PC-9 (cell line): ENCODE measurements at regions of chr21 and their contacts with region 1.

Region 1: GRCh38 chr21:36854391-36854790 is 112.1 kb downstream of the HLCS start:
- DNase-seq: no peak
- H3K4me3 ChIP-seq: no peak overlapping the region
- H3K27ac ChIP-seq: no peak overlapping the region
- H3K4me1 ChIP-seq: peaks cover 14% of the 10 kb centered on the region
- H3K27me3 ChIP-seq: no peaks in the 10 kb centered on the region
- CTCF ChIP-seq: peak; percentile 59

Region 2: DNA sequence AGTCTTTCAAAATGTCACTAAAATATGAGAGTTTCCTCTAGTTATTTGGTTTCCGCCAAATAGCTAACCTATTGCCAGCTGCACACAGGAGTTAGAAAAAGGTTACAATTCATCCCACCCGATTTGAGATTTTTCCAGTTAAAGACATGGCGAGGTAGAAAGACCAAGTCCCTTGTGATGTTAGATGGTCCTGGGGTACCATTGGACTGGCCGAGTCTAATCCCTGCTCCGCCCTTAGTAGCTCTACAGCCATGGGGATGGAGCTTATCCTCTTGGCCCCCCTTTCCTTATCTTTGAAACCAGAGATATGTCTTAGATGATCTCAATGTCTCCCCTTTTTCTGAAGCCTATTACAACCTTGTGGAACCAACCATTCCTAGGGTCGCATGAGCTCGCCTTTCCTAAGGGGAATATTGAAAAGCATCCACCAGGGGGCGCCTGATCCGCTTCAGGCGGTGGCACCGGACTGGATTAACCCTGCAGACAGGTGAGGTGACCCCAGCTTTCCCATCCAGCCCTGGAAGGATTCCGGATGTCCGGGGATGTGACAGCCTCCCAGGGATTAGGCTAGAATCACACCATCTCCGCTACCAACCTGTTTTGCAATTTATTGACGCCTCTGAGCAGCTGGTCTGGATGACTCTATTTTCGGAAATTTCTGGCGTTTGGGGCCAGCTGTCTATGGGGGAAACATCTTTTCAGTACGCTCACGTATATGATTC is 223.7 kb before region 1 on chr21:
- CTCF ChIA-PET with region 1: no interaction called
- POLR2A ChIA-PET with region 1: interaction called, 10 read pairs
- intact Hi-C with region 1: no loop called
- DNase-seq: peak; percentile 43 to 61
- H3K4me3 ChIP-seq: no peak overlapping the region
- H3K27ac ChIP-seq: no peak overlapping the region
- H3K4me1 ChIP-seq: peaks cover 30% of the 10 kb centered on the region
- H3K27me3 ChIP-seq: no peaks in the 10 kb centered on the region
- CTCF ChIP-seq: peak; percentile 81

Region 3: DNA sequence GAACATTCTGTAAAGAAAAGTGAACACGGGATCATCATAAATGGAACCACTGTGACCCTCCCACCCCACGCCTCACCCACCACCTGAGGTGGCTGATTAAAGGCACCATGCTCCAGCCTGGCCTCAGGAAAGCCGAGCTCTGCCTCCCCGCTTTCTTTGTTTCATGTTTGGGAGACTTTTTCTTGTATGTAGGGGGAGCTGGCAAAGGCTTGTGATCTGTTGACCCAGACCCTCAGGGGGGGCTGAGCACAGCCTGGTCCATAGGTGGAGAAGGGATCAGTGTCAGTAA is 117.2 kb before region 1 on chr21:
- CTCF ChIA-PET with region 1: no interaction called
- POLR2A ChIA-PET with region 1: interaction called, 36 read pairs
- intact Hi-C with region 1: no loop called
- DNase-seq: no peak
- H3K4me3 ChIP-seq: no peak overlapping the region
- H3K27ac ChIP-seq: no peak overlapping the region
- H3K4me1 ChIP-seq: no peaks in the 10 kb centered on the region
- H3K27me3 ChIP-seq: no peaks in the 10 kb centered on the region
- CTCF ChIP-seq: no peak

Region 4: DNA sequence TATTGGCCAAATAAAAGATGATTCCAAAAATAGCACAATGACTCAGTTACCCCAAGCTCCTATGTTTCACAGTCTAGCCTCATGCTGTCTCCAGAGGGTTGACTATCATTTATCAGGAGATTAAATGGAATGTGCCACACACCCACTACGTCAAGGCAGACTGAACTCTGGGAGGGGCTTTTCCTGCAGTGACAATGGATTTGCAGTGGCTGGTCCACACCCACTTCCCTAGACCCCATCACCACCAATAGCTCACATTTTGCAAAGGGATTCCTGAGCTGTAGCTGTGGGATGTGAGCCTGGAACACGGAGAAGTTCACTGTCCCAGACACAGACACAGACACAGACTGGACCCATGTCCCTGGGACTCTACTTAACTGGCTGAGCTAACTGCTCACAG is 35.0 kb after region 1 on chr21:
- CTCF ChIA-PET with region 1: no interaction called
- POLR2A ChIA-PET with region 1: no interaction called
- intact Hi-C with region 1: no loop called
- DNase-seq: no peak
- H3K4me3 ChIP-seq: no peak overlapping the region
- H3K27ac ChIP-seq: no peak overlapping the region
- H3K4me1 ChIP-seq: no peaks in the 10 kb centered on the region
- H3K27me3 ChIP-seq: no peaks in the 10 kb centered on the region
- CTCF ChIP-seq: no peak

Region 5: GRCh38 chr21:37145635-37146111 is 291.3 kb after region 1 on chr21:
- CTCF ChIA-PET with region 1: no interaction called
- POLR2A ChIA-PET with region 1: no interaction called
- intact Hi-C with region 1: no loop called
- DNase-seq: no peak
- H3K4me3 ChIP-seq: no peak overlapping the region
- H3K27ac ChIP-seq: no peak overlapping the region
- H3K4me1 ChIP-seq: no peaks in the 10 kb centered on the region
- H3K27me3 ChIP-seq: no peaks in the 10 kb centered on the region
- CTCF ChIP-seq: no peak